ENCODE measurements at regions of chr5 and their contacts with region 1.

Region 1: GRCh38 chr5:32004404-32004803 is 169.7 kb downstream of the GOLPH3 start:
- DNase-seq: no peak
- ATAC-seq: no peak
- H3K4me3 ChIP-seq: no peak overlapping the region
- H3K27ac ChIP-seq: no peak overlapping the region
- H3K4me1 ChIP-seq: peaks cover 0 to 13% (median 0%) of the 10 kb centered on the region in 9 donors
- H3K27me3 ChIP-seq: no peaks in the 10 kb centered on the region
- CTCF ChIP-seq: no peak

Region 2: DNA sequence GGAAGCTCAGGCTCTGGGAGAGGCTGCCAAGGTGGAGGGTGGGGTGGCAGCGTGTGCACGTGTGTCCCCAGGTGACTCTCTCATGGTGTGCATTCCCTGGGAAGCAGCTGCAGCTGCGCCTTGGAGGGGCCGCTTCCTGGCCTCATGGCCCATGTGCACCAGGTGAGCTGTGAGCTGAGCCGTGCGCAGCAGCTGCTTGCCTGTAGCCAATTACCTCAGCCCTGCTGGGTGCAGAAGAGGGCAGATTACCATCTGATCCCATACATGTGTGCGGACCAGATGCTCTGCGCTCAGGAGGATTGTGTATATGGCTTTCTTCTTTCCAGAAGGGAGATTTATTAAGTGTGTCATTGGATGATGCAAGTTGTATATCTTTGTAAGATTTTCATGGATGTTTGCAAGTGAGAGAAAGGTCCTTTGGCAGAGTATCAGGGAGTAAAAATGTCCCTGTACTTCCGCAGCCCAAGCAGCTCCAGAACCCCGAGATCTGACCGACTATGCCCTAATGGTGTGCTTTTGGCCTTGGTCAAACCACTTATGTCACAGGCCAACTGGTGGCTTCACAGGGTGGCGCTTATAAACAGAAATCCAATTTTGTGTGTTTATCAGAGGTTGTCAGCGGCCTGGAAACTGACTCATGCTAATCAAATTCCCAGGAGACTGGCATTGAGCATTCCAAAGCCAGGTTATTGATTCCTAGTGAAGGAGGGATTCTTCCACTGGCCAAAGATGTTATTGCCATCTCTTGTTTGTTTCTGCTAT is 59.5 kb before region 1 on chr5:
- intact Hi-C with region 1: no loop called
- DNase-seq: no peak
- ATAC-seq: peak in 4 of 8 donors; percentile 12 to 25 (median 18)
- H3K4me3 ChIP-seq: no peak overlapping the region
- H3K27ac ChIP-seq: no peak overlapping the region
- H3K4me1 ChIP-seq: peaks cover 0 to 54% (median 24%) of the 10 kb centered on the region in 9 donors
- H3K27me3 ChIP-seq: no peaks in the 10 kb centered on the region
- CTCF ChIP-seq: no peak

Region 3: DNA sequence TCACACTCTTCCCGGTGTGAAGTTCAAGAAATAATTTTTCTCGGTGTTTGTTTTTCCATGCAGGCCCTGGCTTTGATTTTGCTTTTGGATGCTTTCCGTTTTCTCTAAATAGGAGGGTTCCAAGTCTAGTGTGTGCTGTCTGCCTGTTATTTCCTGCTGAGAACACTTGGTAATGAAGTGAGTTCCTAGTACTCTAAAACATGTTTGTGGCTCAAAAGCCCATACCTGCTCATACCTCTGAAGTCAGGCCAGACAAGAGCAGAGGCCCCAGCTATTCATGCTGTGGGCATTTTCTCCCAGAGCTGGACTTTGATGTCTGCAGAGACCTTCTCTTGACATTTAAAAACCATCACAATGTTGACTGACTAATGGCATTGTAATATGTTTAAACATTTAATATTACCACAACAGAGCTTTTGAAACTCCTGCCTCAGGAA is 41.5 kb before region 1 on chr5:
- intact Hi-C with region 1: no loop called
- DNase-seq: no peak
- ATAC-seq: peak in 7 of 8 donors; percentile 25 to 58 (median 42)
- H3K4me3 ChIP-seq: peak overlapping the region in 1 of 10 donors; percentile 5
- H3K27ac ChIP-seq: peak overlapping the region; percentile 17 to 81 (median 70)
- H3K4me1 ChIP-seq: peaks cover 21 to 58% (median 32%) of the 10 kb centered on the region in 9 donors
- H3K27me3 ChIP-seq: no peaks in the 10 kb centered on the region
- CTCF ChIP-seq: no peak

Region 4: GRCh38 chr5:32027717-32028321 is 23.4 kb after region 1 on chr5:
- intact Hi-C with region 1: no loop called
- DNase-seq: peak in 1 of 2 donors; percentile 82
- ATAC-seq: peak; percentile 88 to 96 (median 93)
- H3K4me3 ChIP-seq: peak overlapping the region in 3 of 10 donors; percentile 11 to 19 (median 16)
- H3K27ac ChIP-seq: peak overlapping the region; percentile 63 to 87 (median 76)
- H3K4me1 ChIP-seq: peaks cover 2 to 73% (median 65%) of the 10 kb centered on the region in 9 donors
- H3K27me3 ChIP-seq: no peaks in the 10 kb centered on the region
- CTCF ChIP-seq: no peak

Region 5: DNA sequence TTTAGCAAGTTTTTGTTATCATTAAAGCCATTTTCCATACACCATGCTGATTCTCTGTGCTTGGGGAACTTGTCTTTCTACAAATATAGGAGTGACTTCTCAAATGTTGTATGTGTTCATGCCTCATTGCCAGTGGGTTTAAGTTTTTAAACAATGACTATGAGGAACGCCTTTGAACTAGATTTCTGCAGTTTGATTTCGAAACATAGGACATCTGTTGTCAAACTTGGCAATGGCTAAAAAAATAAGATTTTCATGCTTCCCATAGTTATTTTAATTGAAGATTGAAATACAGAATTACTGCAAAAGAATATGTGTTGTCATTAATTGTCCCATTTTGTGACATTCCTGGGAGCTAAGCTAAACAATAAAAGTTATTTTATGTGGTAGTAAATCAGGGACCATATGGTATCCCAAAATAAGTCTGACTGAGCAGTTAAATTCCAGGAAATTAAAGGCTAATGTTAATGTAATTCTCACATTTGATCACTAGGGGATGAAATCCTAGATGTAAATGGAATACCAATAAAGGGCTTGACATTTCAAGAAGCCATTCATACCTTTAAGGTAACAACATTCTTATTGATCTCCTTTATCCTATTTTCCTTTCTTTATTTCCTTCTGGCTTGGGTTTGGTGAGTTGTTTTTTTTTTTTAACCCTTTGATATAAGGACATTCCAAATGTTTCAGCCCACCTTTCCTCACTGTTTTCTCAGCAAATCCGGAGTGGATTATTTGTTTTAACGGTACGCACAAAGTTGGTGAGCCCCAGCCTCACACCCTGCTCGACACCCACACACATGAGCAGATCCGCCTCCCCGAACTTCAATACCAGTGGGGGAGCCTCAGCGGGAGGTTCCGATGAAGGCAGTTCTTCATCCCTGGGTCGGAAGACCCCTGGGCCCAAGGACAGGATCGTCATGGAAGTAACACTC is 53.0 kb after region 1 on chr5:
- intact Hi-C with region 1: no loop called
- DNase-seq: no peak
- ATAC-seq: no peak
- H3K4me3 ChIP-seq: no peak overlapping the region
- H3K27ac ChIP-seq: peak overlapping the region in 7 of 10 donors; percentile 19 to 73 (median 48)
- H3K4me1 ChIP-seq: peaks cover 6 to 30% (median 18%) of the 10 kb centered on the region in 9 donors
- H3K27me3 ChIP-seq: no peaks in the 10 kb centered on the region
- CTCF ChIP-seq: peak in 5 of 9 donors; percentile 21 to 40 (median 23)

Region 6: GRCh38 chr5:33299621-33300208 is 1295.3 kb after region 1 on chr5:
- intact Hi-C with region 1: loop called in 1 of 10 experiments (anchors 5 kb)
- DNase-seq: no peak
- ATAC-seq: peak; percentile 32 to 83 (median 78)
- H3K4me3 ChIP-seq: no peak overlapping the region
- H3K27ac ChIP-seq: peak overlapping the region in 6 of 10 donors; percentile 11 to 63 (median 49)
- H3K4me1 ChIP-seq: peaks cover 3 to 21% (median 14%) of the 10 kb centered on the region in 9 donors
- H3K27me3 ChIP-seq: no peaks in the 10 kb centered on the region
- CTCF ChIP-seq: peak; percentile 19 to 63 (median 43)

Measured in heart right ventricle (tissue), 16 donors.